Naive thymus-derived CD4-positive, alpha-beta T cell (primary cell): ENCODE measurements at regions of chr12 and their contacts with region 1.

Region 1: GRCh38 chr12:92145731-92146496 is at the start of gene BTG1:
- DNase-seq: peak; percentile 90 to 100 (median 100)
- ATAC-seq: peak; percentile 84
- H3K4me3 ChIP-seq: peak within 1 kb of the TSS; percentile 98
- H3K4me3 Mint-ChIP-seq: peak within 1 kb of the TSS; percentile 94 to 100 (median 98)
- H3K27ac ChIP-seq: peak within 1 kb of the TSS; percentile 91
- H3K27ac Mint-ChIP-seq: peak within 1 kb of the TSS; percentile 98 to 100 (median 99)
- H3K4me1 ChIP-seq: peaks cover 7 to 14% of the 10 kb centered on the region in 2 donors
- H3K4me1 Mint-ChIP-seq: peaks cover 18 to 34% (median 27%) of the 10 kb centered on the region in 7 donors
- H3K27me3 ChIP-seq: no peaks in the 10 kb centered on the region
- H3K27me3 Mint-ChIP-seq: peaks cover 0 to 4% (median 0%) of the 10 kb centered on the region in 5 donors
- total RNA-seq, gene BTG1: 188 to 1,246 (median 571) TPM

Region 2: DNA sequence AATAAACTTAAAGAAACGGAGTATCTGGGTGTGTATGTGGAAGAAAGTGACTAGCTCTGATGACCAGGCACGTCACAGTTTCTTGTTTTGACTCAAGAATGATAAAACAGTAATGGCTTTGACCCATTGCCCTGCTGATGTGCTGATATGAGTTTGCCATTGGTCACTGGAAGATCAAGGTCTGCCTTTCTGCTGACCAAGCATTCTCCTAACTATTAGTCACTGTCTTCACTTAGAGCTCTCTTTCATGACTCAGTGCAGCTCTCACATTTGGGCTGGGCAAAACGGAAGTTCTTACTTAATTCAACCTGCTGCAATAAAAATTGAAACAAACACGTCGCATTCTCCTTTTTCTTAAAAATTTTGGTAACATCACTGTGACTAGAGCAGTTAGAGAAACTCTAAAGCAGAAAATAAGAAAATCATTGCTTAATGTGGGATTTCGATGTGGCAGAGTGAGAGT is 366.9 kb before region 1 on chr12:
- CTCF ChIA-PET with region 1: interaction called, 3 read pairs
- POLR2A ChIA-PET with region 1: interaction called, 45 read pairs
- intact Hi-C with region 1: loop called in 1 of 2 experiments (anchors 1 kb)
- DNase-seq: peak in 8 of 9 donors; percentile 14 to 47 (median 27)
- ATAC-seq: peak; percentile 75
- H3K4me3 ChIP-seq: peak overlapping the region; percentile 29
- H3K4me3 Mint-ChIP-seq: peak overlapping the region; percentile 72 to 92 (median 83)
- H3K27ac ChIP-seq: peak overlapping the region; percentile 67
- H3K27ac Mint-ChIP-seq: peak overlapping the region; percentile 91 to 97 (median 93)
- H3K4me1 ChIP-seq: peaks cover 10 to 35% of the 10 kb centered on the region in 2 donors
- H3K4me1 Mint-ChIP-seq: peaks cover 19 to 70% (median 50%) of the 10 kb centered on the region in 7 donors
- H3K27me3 ChIP-seq: no peaks in the 10 kb centered on the region
- H3K27me3 Mint-ChIP-seq: peaks cover 0 to 4% (median 3%) of the 10 kb centered on the region in 5 donors

Region 3: GRCh38 chr12:92028441-92028709 is 117.5 kb before region 1 on chr12:
- CTCF ChIA-PET with region 1: interaction called, 23 read pairs
- POLR2A ChIA-PET with region 1: interaction called, 377 read pairs
- intact Hi-C with region 1: loop called in 1 of 2 experiments (anchors 1 kb)
- DNase-seq: no peak
- ATAC-seq: no peak
- H3K4me3 ChIP-seq: no peak overlapping the region
- H3K4me3 Mint-ChIP-seq: peak overlapping the region in 7 of 10 donors; percentile 30 to 80 (median 57)
- H3K27ac ChIP-seq: peak overlapping the region; percentile 68
- H3K27ac Mint-ChIP-seq: peak overlapping the region in 8 of 9 donors; percentile 84 to 99 (median 96)
- H3K4me1 ChIP-seq: peaks cover 63 to 64% of the 10 kb centered on the region in 2 donors
- H3K4me1 Mint-ChIP-seq: peaks cover 43 to 92% (median 81%) of the 10 kb centered on the region in 7 donors
- H3K27me3 ChIP-seq: no peaks in the 10 kb centered on the region
- H3K27me3 Mint-ChIP-seq: no peaks in the 10 kb centered on the region

Region 4: GRCh38 chr12:92170050-92170449 is 24.1 kb after region 1 on chr12:
- CTCF ChIA-PET with region 1: no interaction called
- POLR2A ChIA-PET with region 1: interaction called, 232 read pairs
- intact Hi-C with region 1: no loop called
- DNase-seq: no peak
- ATAC-seq: no peak
- H3K4me3 ChIP-seq: no peak overlapping the region
- H3K4me3 Mint-ChIP-seq: no peak overlapping the region
- H3K27ac ChIP-seq: no peak overlapping the region
- H3K27ac Mint-ChIP-seq: peak overlapping the region in 3 of 9 donors; percentile 1 to 65 (median 5)
- H3K4me1 ChIP-seq: peaks cover 0 to 16% of the 10 kb centered on the region in 2 donors
- H3K4me1 Mint-ChIP-seq: peaks cover 8 to 47% (median 41%) of the 10 kb centered on the region in 7 donors
- H3K27me3 ChIP-seq: no peaks in the 10 kb centered on the region
- H3K27me3 Mint-ChIP-seq: no peaks in the 10 kb centered on the region

Region 5: GRCh38 chr12:92304371-92305055 is 158.6 kb after region 1 on chr12:
- CTCF ChIA-PET with region 1: no interaction called
- POLR2A ChIA-PET with region 1: interaction called, 41 read pairs
- intact Hi-C with region 1: loop called in 1 of 2 experiments (anchors 5 kb)
- DNase-seq: no peak
- ATAC-seq: no peak
- H3K4me3 ChIP-seq: no peak overlapping the region
- H3K4me3 Mint-ChIP-seq: no peak overlapping the region
- H3K27ac ChIP-seq: no peak overlapping the region
- H3K27ac Mint-ChIP-seq: peak overlapping the region in 2 of 9 donors; percentile 5 to 8
- H3K4me1 ChIP-seq: peaks cover 0 to 9% of the 10 kb centered on the region in 2 donors
- H3K4me1 Mint-ChIP-seq: peaks cover 9 to 49% (median 17%) of the 10 kb centered on the region in 7 donors
- H3K27me3 ChIP-seq: no peaks in the 10 kb centered on the region
- H3K27me3 Mint-ChIP-seq: no peaks in the 10 kb centered on the region

Region 6: GRCh38 chr12:92505254-92506231 is 359.6 kb after region 1 on chr12:
- CTCF ChIA-PET with region 1: no interaction called
- POLR2A ChIA-PET with region 1: interaction called, 71 read pairs
- intact Hi-C with region 1: loop called (anchors 1 to 2 kb)
- DNase-seq: peak; percentile 11 to 71 (median 50)
- ATAC-seq: peak; percentile 66
- H3K4me3 ChIP-seq: peak overlapping the region; percentile 48
- H3K4me3 Mint-ChIP-seq: peak overlapping the region; percentile 80 to 93 (median 87)
- H3K27ac ChIP-seq: peak overlapping the region; percentile 73
- H3K27ac Mint-ChIP-seq: peak overlapping the region; percentile 89 to 99 (median 96)
- H3K4me1 ChIP-seq: peaks cover 17 to 28% of the 10 kb centered on the region in 2 donors
- H3K4me1 Mint-ChIP-seq: peaks cover 15 to 48% (median 30%) of the 10 kb centered on the region in 7 donors
- H3K27me3 ChIP-seq: no peaks in the 10 kb centered on the region
- H3K27me3 Mint-ChIP-seq: no peaks in the 10 kb centered on the region